Activated T-helper 1 cell treated with anti-CD3 and anti-CD28 coated beads, Interleukin-12 subunit alpha, Interleukin-12 subunit beta, Interleukin-2, Interleukin-4 antibody, amounts not matched to agents 30 ng/mL and 10 ng/mL and 1 ng/mL, durations not matched to agents 14 hours and 24 hours and 36 hours (primary cell): ENCODE measurements at regions of chr6 and their contacts with region 1.

Region 1: GRCh38 chr6:37207903-37208456 is 38.0 kb downstream of the PIM1 start:
- DNase-seq: peak; percentile 83
- H3K4me3 Mint-ChIP-seq: peak overlapping the region; percentile 37
- H3K27ac Mint-ChIP-seq: peak overlapping the region; percentile 86
- H3K4me1 Mint-ChIP-seq: peaks cover 61% of the 10 kb centered on the region
- H3K27me3 Mint-ChIP-seq: no peaks in the 10 kb centered on the region

Region 2: DNA sequence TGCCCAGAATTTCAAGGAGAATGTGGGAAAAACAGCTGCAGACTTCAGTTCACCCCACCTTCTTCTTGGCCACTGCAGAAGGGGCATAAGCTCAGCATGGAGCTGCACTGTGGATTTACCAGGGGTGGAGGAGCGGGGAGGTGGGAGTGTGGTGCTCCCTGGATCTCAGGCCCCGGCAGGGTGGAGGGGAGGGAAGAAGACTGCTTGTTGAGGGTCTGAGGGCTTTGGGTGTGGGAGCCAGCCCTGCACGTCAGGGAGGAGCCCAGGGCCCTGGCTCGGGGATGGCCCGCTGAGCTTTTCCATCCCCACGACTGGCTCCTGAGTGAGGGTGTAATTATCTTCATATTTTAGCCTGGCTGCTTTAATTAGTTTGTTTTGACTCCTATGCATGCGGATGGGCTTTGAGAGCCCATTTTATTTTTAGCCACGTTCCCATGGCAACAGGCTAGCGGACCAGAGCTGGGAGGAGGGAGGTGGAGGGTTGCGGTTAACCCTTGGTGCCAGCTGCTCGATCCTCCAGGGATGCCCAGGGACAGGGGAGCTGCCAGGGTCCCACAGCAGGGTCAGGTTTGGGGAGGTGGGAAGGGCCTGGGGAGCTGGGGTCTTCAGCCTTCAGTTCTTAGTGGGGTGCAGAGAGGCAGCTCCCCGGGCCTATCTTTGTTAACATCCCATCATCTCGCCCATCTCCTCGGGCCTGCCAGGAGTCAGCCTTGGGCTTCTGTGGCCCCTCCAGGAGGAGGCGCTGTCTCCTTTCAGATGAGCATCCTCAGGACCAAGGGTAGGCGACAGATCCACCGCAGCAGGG is 442.2 kb before region 1 on chr6:
- intact Hi-C with region 1: loop called (anchors 1 kb)
- DNase-seq: peak; percentile 79
- H3K4me3 Mint-ChIP-seq: no peak overlapping the region
- H3K27ac Mint-ChIP-seq: no peak overlapping the region
- H3K4me1 Mint-ChIP-seq: peaks cover 39% of the 10 kb centered on the region
- H3K27me3 Mint-ChIP-seq: no peaks in the 10 kb centered on the region

Region 3: GRCh38 chr6:36885461-36886401 is 322.2 kb before region 1 on chr6 and contains the start of gene C6orf89:
- intact Hi-C with region 1: loop called (anchors 1 kb)
- DNase-seq: peak; percentile 94
- H3K4me3 Mint-ChIP-seq: peak within 1 kb of the TSS; percentile 91
- H3K27ac Mint-ChIP-seq: peak within 1 kb of the TSS; percentile 82
- H3K4me1 Mint-ChIP-seq: peaks cover 37% of the 10 kb centered on the region
- H3K27me3 Mint-ChIP-seq: no peaks in the 10 kb centered on the region
- total RNA-seq, gene C6orf89: 31.5 and 31.8 TPM in 2 replicates

Region 4: GRCh38 chr6:37029249-37029971 is 178.6 kb before region 1 on chr6:
- intact Hi-C with region 1: loop called (anchors 2 kb)
- DNase-seq: no peak
- H3K4me3 Mint-ChIP-seq: no peak overlapping the region
- H3K27ac Mint-ChIP-seq: peak overlapping the region; percentile 79
- H3K4me1 Mint-ChIP-seq: peaks cover 63% of the 10 kb centered on the region
- H3K27me3 Mint-ChIP-seq: no peaks in the 10 kb centered on the region

Region 5: GRCh38 chr6:37314487-37315156 is 106.6 kb after region 1 on chr6:
- intact Hi-C with region 1: loop called (anchors 1 kb)
- DNase-seq: peak; percentile 35
- H3K4me3 Mint-ChIP-seq: no peak overlapping the region
- H3K27ac Mint-ChIP-seq: peak overlapping the region; percentile 32
- H3K4me1 Mint-ChIP-seq: peaks cover 28% of the 10 kb centered on the region
- H3K27me3 Mint-ChIP-seq: no peaks in the 10 kb centered on the region